Endothelial cell of umbilical vein (primary cell): ENCODE measurements at regions of chr4 and their contacts with region 1.

Region 1: DNA sequence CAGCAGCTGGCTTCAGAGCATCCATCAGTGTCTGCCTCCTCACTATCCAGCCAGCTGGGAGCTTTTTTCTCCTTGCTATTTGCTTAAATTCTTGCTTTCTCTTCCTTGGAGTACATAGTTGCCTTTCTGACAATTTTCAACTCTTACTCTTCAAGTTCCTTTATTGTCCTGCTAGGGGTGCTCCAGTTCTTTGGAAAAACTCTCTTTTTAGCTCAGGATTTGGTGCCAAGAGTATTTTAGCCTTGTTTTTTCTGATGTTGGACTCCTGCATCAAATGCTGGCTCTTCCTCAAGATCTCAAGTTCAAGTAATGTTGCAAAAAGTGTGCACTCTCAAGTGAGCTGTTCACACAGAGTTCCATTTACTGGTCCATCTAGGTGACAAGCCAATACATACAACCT is 126.4 kb downstream of the KDR start:
- DNase-seq: peak; percentile 65
- H3K4me3 ChIP-seq: no peak overlapping the region
- H3K27ac ChIP-seq: no peak overlapping the region
- H3K4me1 ChIP-seq: no peaks in the 10 kb centered on the region
- H3K27me3 ChIP-seq: peaks cover 0 to 2% of the 10 kb centered on the region in 2 experiments
- CTCF ChIP-seq: peak; percentile 34 to 43
- POLR2A ChIP-seq: no peak

Region 2: DNA sequence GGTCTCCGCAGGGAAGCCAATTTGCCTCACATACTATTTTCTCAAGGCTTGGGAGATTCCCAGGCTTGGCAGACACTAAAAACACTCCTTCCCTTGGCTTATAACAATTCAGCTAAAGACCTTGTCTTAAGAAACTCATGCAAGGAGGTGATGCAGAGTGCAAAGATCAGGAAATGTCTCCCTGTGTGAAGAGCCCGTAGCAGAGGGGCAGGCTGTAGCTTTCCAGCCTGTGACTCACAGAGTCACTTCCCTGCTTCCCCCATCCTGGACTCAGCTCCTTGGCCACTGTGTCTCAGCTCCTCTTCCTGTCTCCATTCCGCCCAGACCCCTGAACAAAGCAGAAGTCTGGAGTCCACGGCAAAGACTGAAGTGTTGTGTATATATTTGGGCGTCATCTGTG is 70.2 kb after region 1 on chr4:
- CTCF ChIA-PET with region 1: interaction called, 18 read pairs
- POLR2A ChIA-PET with region 1: no interaction called
- dilution Hi-C with region 1: no loop called
- intact Hi-C with region 1: no loop called
- DNase-seq: peak; percentile 95
- H3K4me3 ChIP-seq: peak overlapping the region in 1 of 3 experiments; percentile 2
- H3K27ac ChIP-seq: peak overlapping the region; percentile 98
- H3K4me1 ChIP-seq: peaks cover 26% of the 10 kb centered on the region
- H3K27me3 ChIP-seq: no peaks in the 10 kb centered on the region
- CTCF ChIP-seq: no peak
- POLR2A ChIP-seq: peak; percentile 60

Region 3: DNA sequence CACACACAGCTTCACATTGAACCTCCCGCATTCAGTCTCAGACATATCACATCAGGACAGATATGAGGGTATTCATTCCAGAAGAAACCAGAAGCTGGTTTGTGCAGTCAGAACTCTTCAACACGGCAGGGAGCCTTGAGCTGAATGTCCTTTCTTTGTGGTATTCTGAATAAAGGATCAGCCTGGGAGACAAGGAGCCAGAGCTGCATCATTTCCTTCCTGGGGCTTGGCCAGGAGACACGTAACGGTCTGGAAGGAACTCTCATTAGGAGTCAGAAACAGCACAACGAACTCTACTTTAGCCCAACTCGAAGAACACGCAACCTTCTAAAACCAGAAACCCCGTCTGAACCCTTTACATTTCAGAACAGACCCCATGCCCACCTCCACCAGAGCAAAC is 80.0 kb after region 1 on chr4:
- CTCF ChIA-PET with region 1: interaction called, 16 read pairs
- POLR2A ChIA-PET with region 1: no interaction called
- dilution Hi-C with region 1: no loop called
- intact Hi-C with region 1: no loop called
- DNase-seq: peak; percentile 92
- H3K4me3 ChIP-seq: peak overlapping the region in 1 of 3 experiments; percentile 28
- H3K27ac ChIP-seq: peak overlapping the region; percentile 99
- H3K4me1 ChIP-seq: peaks cover 48% of the 10 kb centered on the region
- H3K27me3 ChIP-seq: no peaks in the 10 kb centered on the region
- CTCF ChIP-seq: no peak
- POLR2A ChIP-seq: peak; percentile 79

Region 4: GRCh38 chr4:55087009-55087929 is 88.3 kb after region 1 on chr4:
- CTCF ChIA-PET with region 1: interaction called, 10 read pairs
- POLR2A ChIA-PET with region 1: no interaction called
- dilution Hi-C with region 1: no loop called
- intact Hi-C with region 1: no loop called
- DNase-seq: no peak
- H3K4me3 ChIP-seq: no peak overlapping the region
- H3K27ac ChIP-seq: no peak overlapping the region
- H3K4me1 ChIP-seq: peaks cover 33% of the 10 kb centered on the region
- H3K27me3 ChIP-seq: no peaks in the 10 kb centered on the region
- CTCF ChIP-seq: no peak
- POLR2A ChIP-seq: no peak

Region 5: GRCh38 chr4:55184600-55185523 is 185.9 kb after region 1 on chr4:
- CTCF ChIA-PET with region 1: interaction called, 15 read pairs
- POLR2A ChIA-PET with region 1: no interaction called
- dilution Hi-C with region 1: no loop called
- intact Hi-C with region 1: no loop called
- DNase-seq: no peak
- H3K4me3 ChIP-seq: no peak overlapping the region
- H3K27ac ChIP-seq: peak overlapping the region; percentile 63
- H3K4me1 ChIP-seq: peaks cover 64% of the 10 kb centered on the region
- H3K27me3 ChIP-seq: no peaks in the 10 kb centered on the region
- CTCF ChIP-seq: peak in 1 of 2 donors; percentile 30
- POLR2A ChIP-seq: no peak

Region 6: DNA sequence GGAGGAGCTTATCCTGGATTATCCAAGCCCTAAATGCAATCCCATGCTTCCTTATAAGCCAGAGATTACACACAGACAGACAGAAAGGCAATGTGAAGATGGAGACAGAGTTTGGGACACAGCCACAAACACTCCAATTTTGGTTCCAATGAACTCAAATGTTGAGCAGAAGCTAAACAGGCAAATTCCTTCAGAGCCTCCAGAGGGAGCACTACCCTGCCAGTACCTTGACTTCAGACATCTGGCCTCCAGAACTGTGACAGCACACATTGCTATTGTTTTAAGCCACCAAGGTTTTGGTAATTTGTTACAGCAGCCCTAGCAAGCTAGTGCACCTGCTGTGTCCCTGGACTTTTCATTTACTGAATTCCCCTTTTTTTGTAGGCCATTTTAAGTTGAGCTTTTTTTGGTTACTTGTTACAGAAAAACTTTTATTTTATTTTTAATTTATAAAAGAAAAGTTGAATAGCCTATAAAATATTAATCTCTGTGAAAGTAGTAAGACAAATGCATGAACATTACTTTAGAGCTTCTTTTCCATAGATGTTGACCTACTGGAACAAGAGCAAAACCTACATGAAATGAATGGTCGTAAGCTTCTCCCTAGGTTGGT is 313.6 kb after region 1 on chr4:
- CTCF ChIA-PET with region 1: interaction called, 11 read pairs
- POLR2A ChIA-PET with region 1: no interaction called
- dilution Hi-C with region 1: loop called (anchors 25 kb)
- intact Hi-C with region 1: no loop called
- DNase-seq: peak; percentile 63
- H3K4me3 ChIP-seq: no peak overlapping the region
- H3K27ac ChIP-seq: no peak overlapping the region
- H3K4me1 ChIP-seq: no peaks in the 10 kb centered on the region
- H3K27me3 ChIP-seq: no peaks in the 10 kb centered on the region
- CTCF ChIP-seq: peak; percentile 60 to 76
- POLR2A ChIP-seq: no peak

Region 7: DNA sequence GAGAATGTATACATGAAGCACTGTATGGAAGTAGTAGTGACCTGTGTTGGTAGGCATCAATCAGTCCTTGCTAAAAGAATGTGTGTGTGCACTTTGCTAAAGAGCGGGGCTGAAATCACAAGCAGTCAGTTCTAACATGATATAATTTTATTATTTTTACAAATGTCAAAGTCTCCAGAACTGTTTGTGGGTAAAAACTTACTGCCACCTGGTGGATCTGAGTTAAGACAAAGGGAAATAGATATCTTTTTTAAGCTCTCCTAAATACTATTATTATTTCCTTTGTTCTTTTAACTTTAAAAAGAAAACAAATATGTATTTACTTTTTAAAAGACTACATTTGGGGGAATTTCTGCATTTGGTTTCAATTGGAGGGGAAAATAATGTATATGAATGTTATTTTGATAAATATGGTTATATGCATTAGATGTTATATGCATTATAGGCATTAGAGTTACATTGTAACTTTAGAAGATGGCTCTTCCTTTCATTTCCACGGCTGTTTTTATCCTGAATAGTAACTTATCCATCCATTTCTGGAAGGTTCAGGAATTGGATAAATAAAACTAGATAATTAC is 555.5 kb after region 1 on chr4:
- CTCF ChIA-PET with region 1: interaction called, 22 read pairs
- POLR2A ChIA-PET with region 1: no interaction called
- dilution Hi-C with region 1: no loop called
- intact Hi-C with region 1: loop called (anchors 1 kb)
- DNase-seq: peak; percentile 55
- H3K4me3 ChIP-seq: no peak overlapping the region
- H3K27ac ChIP-seq: no peak overlapping the region
- H3K4me1 ChIP-seq: no peaks in the 10 kb centered on the region
- H3K27me3 ChIP-seq: peaks cover under 1 to 2% of the 10 kb centered on the region in 2 experiments
- CTCF ChIP-seq: peak; percentile 14 to 23
- POLR2A ChIP-seq: no peak